SK-N-SH (cell line): ENCODE measurements at regions of chr5 and their contacts with region 1.

Region 1: GRCh38 chr5:139863855-139864558 is 68.4 kb downstream of the PSD2 start:
- DNase-seq: peak; percentile 85
- H3K4me3 ChIP-seq: no peak overlapping the region
- H3K27ac ChIP-seq: no peak overlapping the region
- H3K4me1 ChIP-seq: peaks cover 0 to 2% of the 10 kb centered on the region in 2 experiments; a peak in 1 of 4 replicates
- H3K27me3 ChIP-seq: no peaks in the 10 kb centered on the region
- CTCF ChIP-seq: peak; percentile 79
- EP300 ChIP-seq: no peak
- RAD21 ChIP-seq: peak; percentile 79

Region 2: DNA sequence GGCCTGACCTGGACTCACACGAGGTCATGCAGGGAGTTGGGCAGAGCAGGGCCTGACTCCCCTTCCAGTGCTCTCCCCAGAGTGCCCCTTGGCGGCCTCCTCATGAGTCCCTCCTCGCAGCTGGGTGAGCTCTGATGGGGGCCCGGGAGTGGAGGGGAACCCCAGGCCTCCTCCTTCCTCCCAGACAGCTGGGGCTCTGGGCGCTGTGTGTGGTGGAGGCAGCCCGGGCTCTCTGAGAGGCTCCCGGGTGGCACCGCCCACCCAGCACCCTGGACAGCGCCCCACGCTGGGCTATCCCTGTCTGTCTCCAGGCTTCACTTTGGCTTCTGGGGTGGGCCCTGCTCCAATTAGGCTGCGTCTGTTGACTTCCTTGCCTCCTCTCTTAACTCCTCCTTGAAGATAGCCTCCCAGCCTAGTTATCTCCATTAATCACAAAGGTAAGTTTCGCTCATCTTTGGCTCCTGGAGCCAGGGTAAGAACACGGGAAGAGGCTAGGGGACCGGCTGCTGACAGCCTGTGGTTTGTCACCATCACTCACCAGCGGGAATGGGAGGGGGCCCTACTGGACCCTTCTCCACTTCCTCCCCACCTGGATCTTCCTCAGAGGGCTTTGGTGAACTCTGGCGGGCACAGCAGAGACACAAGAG is 55.4 kb before region 1 on chr5:
- CTCF ChIA-PET with region 1: no interaction called
- POLR2A ChIA-PET with region 1: no interaction called
- DNase-seq: no peak
- H3K4me3 ChIP-seq: no peak overlapping the region
- H3K27ac ChIP-seq: no peak overlapping the region
- H3K4me1 ChIP-seq: no peaks in the 10 kb centered on the region
- H3K27me3 ChIP-seq: peaks cover 4% of the 10 kb centered on the region; the same call in 1 of the 2 replicates
- CTCF ChIP-seq: no peak
- EP300 ChIP-seq: no peak
- RAD21 ChIP-seq: no peak

Region 3: GRCh38 chr5:139844472-139845145 is 19.4 kb before region 1 on chr5:
- CTCF ChIA-PET with region 1: interaction called, 10 read pairs
- POLR2A ChIA-PET with region 1: no interaction called
- DNase-seq: peak; percentile 81
- H3K4me3 ChIP-seq: no peak overlapping the region; a peak in 1 of 4 replicates
- H3K27ac ChIP-seq: no peak overlapping the region
- H3K4me1 ChIP-seq: peaks cover 0 to 2% of the 10 kb centered on the region in 2 experiments; a peak in 1 of 4 replicates
- H3K27me3 ChIP-seq: no peaks in the 10 kb centered on the region
- CTCF ChIP-seq: peak; percentile 84
- EP300 ChIP-seq: no peak
- RAD21 ChIP-seq: peak; percentile 74

Region 4: DNA sequence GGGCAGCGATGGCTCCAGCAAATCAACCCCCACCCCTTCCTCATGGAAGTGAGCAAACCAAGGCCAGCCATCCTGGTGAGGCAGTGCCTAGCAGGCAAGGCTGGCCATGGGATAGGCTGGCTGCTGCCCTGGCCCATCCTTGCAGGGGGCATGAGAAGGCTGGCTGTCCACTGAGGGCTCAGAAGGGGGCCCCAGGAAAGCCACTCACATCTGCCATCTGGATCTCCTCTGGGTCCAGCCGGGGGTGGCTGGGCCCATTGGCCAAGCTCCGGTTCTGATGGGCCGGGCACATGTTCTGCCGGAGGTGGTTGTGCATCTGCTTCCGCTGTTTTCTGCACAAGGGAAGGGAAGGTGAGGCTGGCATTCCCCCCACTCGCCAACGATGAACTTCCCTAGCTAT is 11.3 kb before region 1 on chr5:
- CTCF ChIA-PET with region 1: interaction called, 17 read pairs
- POLR2A ChIA-PET with region 1: no interaction called
- DNase-seq: no peak
- H3K4me3 ChIP-seq: no peak overlapping the region
- H3K27ac ChIP-seq: no peak overlapping the region
- H3K4me1 ChIP-seq: peaks cover 0 to 5% of the 10 kb centered on the region in 2 experiments; a peak in 1 of 4 replicates
- H3K27me3 ChIP-seq: no peaks in the 10 kb centered on the region
- CTCF ChIP-seq: no peak
- EP300 ChIP-seq: no peak
- RAD21 ChIP-seq: no peak

Region 5: GRCh38 chr5:139882961-139883539 is 19.0 kb after region 1 on chr5:
- CTCF ChIA-PET with region 1: interaction called, 11 read pairs
- POLR2A ChIA-PET with region 1: no interaction called
- DNase-seq: peak; percentile 55
- H3K4me3 ChIP-seq: no peak overlapping the region
- H3K27ac ChIP-seq: peak overlapping the region in 1 of 2 experiments; percentile 44; a peak in 1 of 4 replicates
- H3K4me1 ChIP-seq: peaks cover 0 to 47% of the 10 kb centered on the region in 2 experiments; a peak in 1 of 4 replicates
- H3K27me3 ChIP-seq: no peaks in the 10 kb centered on the region
- CTCF ChIP-seq: no peak
- EP300 ChIP-seq: no peak
- RAD21 ChIP-seq: no peak